PC-9 (cell line): ENCODE measurements at regions of chr1 and their contacts with region 1.

Region 1: GRCh38 chr1:211514030-211514754 is 22.2 kb upstream of the RD3 start:
- DNase-seq: peak; percentile 78 to 90
- H3K4me3 ChIP-seq: no peak overlapping the region
- H3K27ac ChIP-seq: peak overlapping the region; percentile 63
- H3K4me1 ChIP-seq: peaks cover 41% of the 10 kb centered on the region
- H3K27me3 ChIP-seq: no peaks in the 10 kb centered on the region
- CTCF ChIP-seq: peak; percentile 84

Region 2: DNA sequence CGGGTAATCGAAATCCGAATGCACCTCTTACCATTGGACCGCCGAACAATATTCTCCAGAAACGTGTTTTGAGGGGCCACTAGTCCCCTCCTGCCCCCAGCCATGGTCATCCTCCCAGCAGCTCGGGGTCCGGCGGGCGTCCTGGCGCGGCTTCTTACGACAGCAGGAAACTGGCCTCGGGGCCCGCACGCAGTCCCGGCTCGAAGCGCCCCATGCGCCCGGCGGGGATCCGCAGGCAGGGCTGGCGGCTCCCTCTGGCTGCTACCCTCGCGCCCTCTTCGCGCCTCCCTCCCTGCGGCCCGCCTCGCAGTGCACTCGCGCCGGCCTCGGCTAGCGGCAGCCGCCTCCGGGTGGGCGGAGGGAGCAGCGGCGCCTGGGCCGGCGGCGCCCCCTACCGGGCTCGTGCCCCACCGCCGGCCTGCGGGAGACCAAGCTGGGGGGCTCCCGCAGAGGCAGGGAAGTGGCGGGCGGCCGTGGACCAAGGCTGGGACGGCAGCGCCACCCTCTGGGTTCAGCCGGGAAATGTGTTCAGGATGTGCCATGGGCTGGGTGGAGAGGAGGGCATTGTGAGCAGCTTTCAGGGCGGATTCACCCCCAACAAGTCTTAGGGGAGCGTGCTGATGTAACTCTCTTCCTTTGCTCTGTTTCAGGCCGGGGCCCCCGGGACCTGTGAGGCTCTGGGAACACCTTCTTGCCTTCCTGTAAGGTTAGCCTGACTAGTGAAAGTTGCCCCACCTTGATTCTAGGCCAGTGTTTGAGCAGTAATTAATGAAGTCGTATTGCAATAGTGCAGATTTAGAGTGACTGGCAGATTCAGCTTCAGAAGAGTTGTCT is 380.1 kb before region 1 on chr1 and contains the start of gene KCNH1:
- CTCF ChIA-PET with region 1: no interaction called
- POLR2A ChIA-PET with region 1: no interaction called
- intact Hi-C with region 1: loop called (anchors 1 kb)
- DNase-seq: peak in 1 of 2 experiments; percentile 81
- H3K4me3 ChIP-seq: peak within 1 kb of the TSS; percentile 4; the same call in 1 of the 2 replicates
- H3K27ac ChIP-seq: no peak within 1 kb of the TSS
- H3K4me1 ChIP-seq: no peaks in the 10 kb centered on the region
- H3K27me3 ChIP-seq: peaks cover 42% of the 10 kb centered on the region
- CTCF ChIP-seq: peak; percentile 69
- total RNA-seq, gene KCNH1: not detected in 2 replicates

Region 3: DNA sequence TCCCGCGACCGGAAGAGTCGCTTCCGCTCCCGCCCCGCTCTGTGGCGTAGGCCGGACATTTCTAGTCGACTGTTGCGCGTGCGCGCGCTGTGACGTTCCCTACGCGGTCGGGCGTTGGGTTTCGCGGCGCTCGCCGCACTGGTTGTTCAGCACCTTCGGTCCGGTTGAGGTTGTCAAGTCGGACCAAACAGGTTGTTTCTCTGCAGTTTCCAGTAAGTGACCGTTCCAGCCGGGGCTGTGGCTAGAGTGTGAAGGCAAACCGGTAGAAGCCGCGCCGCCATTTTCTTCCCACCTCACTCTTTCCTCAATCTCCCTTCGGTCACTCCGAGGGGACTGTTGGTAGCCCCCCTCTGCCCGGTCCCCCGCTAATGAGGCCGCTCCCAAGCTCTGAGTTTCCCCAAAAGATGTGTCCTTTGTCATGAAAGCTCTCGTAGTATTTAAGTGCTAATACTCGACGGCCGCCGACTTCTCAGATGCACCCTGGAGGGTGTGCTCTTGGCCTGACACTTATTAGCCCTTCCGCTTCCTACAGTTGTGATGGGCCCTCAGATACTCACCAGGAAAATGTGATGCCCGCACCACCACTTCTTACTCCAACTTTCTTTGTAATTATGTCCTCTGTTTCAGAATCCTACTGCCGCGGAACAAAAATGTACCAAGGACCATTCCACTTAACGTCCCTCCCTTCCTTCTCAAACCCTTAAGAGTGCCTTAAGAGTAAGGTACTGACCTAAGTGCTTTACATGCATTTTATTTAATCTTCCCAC is 131.3 kb before region 1 on chr1:
- CTCF ChIA-PET with region 1: no interaction called
- POLR2A ChIA-PET with region 1: no interaction called
- intact Hi-C with region 1: loop called (anchors 2 kb)
- DNase-seq: peak; percentile 84 to 92
- H3K4me3 ChIP-seq: peak overlapping the region; percentile 68
- H3K27ac ChIP-seq: peak overlapping the region; percentile 93
- H3K4me1 ChIP-seq: peaks cover 13% of the 10 kb centered on the region
- H3K27me3 ChIP-seq: no peaks in the 10 kb centered on the region
- CTCF ChIP-seq: no peak

Region 4: DNA sequence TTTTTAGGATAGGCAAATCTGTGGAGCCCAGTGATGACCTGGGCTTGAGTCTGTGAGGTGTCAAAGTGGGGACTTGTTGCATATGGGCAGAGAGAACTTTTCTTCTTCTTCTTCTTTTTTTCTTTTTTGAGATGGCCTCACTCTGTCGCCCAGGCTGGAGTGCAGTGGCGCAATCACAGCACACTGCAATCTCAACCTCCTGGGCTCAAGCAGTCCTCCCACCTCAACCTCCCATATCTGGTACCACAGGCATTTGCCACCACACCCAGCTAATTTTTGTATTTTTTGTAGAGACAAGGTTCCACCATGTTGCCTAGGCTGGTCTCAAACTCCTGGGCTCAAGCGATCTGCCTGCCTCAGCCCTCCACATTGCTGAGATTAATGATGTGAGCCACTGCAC is 102.6 kb before region 1 on chr1:
- CTCF ChIA-PET with region 1: no interaction called
- POLR2A ChIA-PET with region 1: no interaction called
- intact Hi-C with region 1: no loop called
- DNase-seq: no peak
- H3K4me3 ChIP-seq: no peak overlapping the region
- H3K27ac ChIP-seq: no peak overlapping the region
- H3K4me1 ChIP-seq: no peaks in the 10 kb centered on the region
- H3K27me3 ChIP-seq: no peaks in the 10 kb centered on the region
- CTCF ChIP-seq: no peak

Region 5: DNA sequence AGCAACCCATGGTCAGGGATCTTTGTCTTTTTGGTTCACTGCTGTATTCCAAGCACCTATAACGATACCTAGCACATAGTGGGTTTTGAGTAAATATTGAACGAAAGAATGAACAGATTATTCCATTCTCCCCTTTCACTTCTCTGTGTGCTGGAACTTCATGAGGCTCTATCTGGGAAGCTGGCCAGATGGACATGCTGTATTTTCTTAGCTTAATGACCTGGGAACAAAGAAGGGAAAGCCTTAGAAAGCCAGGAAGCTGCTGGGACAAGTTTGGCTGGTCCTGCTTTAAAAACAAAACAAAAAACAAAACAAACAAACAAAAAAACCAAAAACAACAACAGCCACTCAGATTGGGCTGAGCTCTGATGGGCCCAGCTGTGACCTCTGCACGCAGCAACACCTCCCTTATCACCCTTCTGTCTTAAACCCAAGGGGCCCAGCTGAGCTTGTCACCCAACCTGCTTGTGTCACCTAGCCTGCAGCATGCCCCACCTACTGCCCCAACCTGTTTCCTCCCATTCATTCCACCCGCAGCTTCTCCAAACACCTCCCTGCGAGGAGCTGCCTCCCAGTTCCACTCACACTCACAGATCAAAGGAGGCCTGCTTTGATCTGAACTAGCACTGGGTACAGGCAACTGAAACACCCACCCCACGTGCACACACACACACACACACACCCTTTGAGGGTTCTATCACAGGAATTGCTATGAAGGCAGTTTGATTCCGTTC is 27.7 kb after region 1 on chr1:
- CTCF ChIA-PET with region 1: interaction called, 5 read pairs
- POLR2A ChIA-PET with region 1: interaction called, 3 read pairs
- intact Hi-C with region 1: loop called (anchors 2 kb)
- DNase-seq: peak; percentile 84 to 87
- H3K4me3 ChIP-seq: peak overlapping the region; percentile 3; the same call in 1 of the 2 replicates
- H3K27ac ChIP-seq: peak overlapping the region; percentile 61
- H3K4me1 ChIP-seq: peaks cover 48% of the 10 kb centered on the region
- H3K27me3 ChIP-seq: no peaks in the 10 kb centered on the region
- CTCF ChIP-seq: no peak

Region 6: DNA sequence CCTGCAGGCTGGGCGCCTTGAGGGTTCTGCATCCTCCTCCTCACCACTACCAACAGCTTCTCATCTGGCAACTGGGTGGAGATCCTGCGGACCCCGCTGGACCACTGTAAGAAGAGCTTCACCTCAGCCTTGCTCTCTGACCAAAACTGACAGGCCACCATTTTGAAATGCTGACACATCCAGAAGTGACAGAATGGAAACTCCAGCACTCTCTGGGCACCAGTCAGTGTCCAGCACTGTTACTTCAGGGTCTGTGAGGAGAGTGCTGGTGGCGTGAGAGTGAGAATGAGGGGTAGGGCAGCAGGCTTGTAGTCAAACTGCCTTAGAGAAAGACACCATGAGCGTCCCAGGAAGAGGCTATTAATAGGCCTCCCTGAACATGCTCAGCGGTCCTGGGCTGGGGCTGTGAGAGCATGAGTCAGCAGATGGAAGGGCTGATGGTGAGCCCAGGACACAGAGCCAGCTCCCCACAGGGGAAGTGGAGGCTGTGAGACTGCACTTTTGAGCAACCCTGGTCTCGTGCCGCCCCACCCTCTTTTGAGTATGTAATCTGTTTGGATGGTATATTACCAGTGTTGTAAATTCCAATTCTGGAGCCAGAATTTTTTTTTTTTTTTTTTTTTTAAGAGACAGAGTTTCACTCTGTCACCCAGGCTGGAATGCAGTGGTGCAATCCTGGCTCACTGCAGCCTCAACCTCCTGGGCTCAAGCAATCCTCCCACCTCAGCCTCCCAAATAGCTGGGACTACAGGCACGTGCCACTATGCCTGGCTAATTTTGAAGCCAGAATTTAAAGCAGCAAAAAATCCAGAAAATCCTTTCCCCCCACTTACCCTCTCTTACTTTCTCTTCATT is 99.1 kb after region 1 on chr1:
- CTCF ChIA-PET with region 1: interaction called, 3 read pairs
- POLR2A ChIA-PET with region 1: interaction called, 21 read pairs
- intact Hi-C with region 1: no loop called
- DNase-seq: peak; percentile 79 to 84
- H3K4me3 ChIP-seq: no peak overlapping the region
- H3K27ac ChIP-seq: peak overlapping the region; percentile 71
- H3K4me1 ChIP-seq: peaks cover 23% of the 10 kb centered on the region
- H3K27me3 ChIP-seq: no peaks in the 10 kb centered on the region
- CTCF ChIP-seq: no peak

Region 7: DNA sequence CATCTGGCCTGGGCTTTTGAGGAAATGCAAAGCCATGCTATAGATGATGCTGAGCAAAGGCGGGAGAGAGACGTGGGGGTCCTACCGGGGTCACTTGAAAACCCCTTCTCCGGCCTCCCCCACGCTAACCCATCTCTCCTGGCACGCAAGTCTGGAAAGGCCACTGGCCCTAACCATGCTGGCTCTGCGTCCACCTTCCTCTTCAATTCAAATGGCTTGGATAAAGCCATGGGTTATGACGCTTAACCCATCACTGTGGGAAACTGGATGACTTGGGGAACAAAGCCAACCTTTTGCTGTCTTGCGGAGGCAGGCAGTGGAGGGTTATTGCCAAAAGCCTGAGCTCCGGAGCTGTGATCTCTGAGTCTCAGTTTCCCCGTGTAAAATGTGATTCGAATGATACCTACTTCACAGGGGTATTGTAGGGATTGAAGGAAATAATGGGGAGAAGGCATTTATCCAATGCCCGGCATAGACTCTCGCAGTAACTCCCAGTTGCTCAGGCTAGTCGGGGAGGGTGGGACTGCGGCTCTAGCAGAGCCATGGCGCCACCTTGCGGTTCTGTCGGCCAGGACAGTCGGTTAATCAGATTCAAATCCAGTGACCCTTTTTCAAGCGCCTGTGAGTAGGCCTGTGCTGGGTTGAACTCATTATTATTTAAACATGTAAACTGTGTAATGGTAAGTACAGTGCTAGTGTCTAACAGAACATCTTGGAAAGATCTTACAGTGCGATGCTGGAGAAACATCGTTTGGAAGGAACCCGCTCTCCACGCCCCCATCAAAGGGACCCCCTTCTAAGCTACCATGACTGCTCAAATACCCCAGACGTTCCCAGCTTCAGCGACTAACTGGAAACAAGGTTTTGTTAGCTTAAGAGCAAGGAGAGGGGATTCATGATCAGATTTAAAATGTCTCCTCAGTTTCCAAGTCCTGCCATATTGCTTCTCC is 140.9 kb after region 1 on chr1:
- CTCF ChIA-PET with region 1: interaction called, 4 read pairs
- POLR2A ChIA-PET with region 1: interaction called, 9 read pairs
- intact Hi-C with region 1: loop called (anchors 1 kb)
- DNase-seq: peak; percentile 69 to 85
- H3K4me3 ChIP-seq: no peak overlapping the region
- H3K27ac ChIP-seq: peak overlapping the region; percentile 94
- H3K4me1 ChIP-seq: peaks cover 33% of the 10 kb centered on the region
- H3K27me3 ChIP-seq: no peaks in the 10 kb centered on the region
- CTCF ChIP-seq: peak; percentile 94